Natural killer cell (primary cell): ENCODE measurements at regions of chr1 and their contacts with region 1.

Region 1: DNA sequence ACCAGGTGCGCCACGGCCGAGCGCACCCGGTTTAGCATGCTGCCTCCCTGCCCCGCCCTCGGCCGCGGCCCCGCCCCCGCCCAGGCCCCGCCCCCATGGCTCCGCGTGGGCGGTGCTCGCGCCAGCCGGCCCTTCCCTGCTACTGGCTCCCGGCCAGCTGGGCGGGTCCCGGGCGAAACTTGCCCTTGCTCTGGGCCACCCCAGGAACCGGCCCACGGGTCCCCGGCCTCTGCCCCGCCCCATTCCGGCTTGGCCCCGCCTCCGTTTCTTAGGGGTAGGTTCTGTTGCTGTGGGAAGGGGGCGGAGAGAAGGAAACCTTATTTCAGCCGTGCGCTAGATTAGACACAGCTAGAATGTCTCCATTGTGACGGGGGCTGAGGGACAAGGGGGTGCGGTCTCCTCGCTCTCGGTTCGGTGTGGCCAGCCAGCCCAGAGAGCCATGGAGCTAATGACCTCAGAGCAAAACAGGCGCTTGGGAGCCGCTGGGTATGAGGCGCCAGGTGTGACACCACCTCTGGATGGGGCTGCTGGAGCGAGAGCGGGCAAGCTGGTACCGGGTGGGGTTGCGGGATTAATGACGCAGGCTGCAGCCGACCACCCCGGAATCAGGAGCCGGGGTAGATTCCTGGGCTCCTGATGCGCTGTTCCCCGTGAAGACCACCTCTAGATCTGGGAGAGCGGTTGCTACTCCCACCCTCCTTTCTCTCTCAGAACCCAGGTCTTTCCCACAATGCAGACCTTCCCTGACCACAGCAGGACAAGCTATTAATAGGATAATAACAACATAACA is at the start of gene PPM1J:
- DNase-seq: peak; percentile 92 to 94
- ATAC-seq: peak; percentile 82 to 92 (median 86)
- H3K4me3 ChIP-seq: peak within 1 kb of the TSS; percentile 46
- H3K4me3 Mint-ChIP-seq: peak within 1 kb of the TSS; percentile 93
- H3K27ac ChIP-seq: no peak within 1 kb of the TSS
- H3K27ac Mint-ChIP-seq: peak within 1 kb of the TSS; percentile 67 to 87
- H3K4me1 ChIP-seq: peaks cover 37% of the 10 kb centered on the region
- H3K4me1 Mint-ChIP-seq: peaks cover 14 to 29% of the 10 kb centered on the region in 2 donors
- H3K27me3 ChIP-seq: peaks cover 18% of the 10 kb centered on the region
- H3K27me3 Mint-ChIP-seq: peaks cover 0 to 8% of the 10 kb centered on the region in 2 donors
- CTCF ChIP-seq: no peak
- total RNA-seq, gene PPM1J: 0.26 TPM in 1 of 3 donors, not detected in the others

Region 2: DNA sequence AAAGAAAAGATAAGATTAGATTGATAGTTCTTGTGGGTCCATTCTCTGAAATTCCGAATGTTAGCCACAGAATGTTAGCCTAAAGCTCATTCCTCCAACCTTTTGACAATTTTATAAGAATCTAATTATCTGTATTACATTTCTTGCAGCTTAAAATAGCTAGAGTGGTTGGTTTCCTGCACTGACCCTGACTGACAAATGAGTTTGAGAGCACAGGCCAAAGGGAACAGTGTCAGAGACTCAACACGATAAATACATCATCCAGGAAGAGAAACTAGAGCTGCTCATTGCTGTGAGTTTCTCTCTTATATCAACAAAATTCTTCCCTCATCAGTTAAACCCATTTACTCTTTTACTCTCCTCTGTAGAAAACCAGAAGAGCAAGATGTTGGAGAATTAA is 81.8 kb after region 1 on chr1:
- intact Hi-C with region 1: loop called (anchors 2 kb)
- DNase-seq: no peak
- ATAC-seq: no peak
- H3K4me3 ChIP-seq: no peak overlapping the region
- H3K4me3 Mint-ChIP-seq: no peak overlapping the region
- H3K27ac ChIP-seq: no peak overlapping the region
- H3K27ac Mint-ChIP-seq: no peak overlapping the region
- H3K4me1 ChIP-seq: peaks cover 4% of the 10 kb centered on the region
- H3K4me1 Mint-ChIP-seq: peaks cover 30 to 35% of the 10 kb centered on the region in 2 donors
- H3K27me3 ChIP-seq: no peaks in the 10 kb centered on the region
- H3K27me3 Mint-ChIP-seq: no peaks in the 10 kb centered on the region
- CTCF ChIP-seq: no peak

Region 3: GRCh38 chr1:112955781-112956543 is 240.5 kb after region 1 on chr1 and contains the start of gene SLC16A1:
- intact Hi-C with region 1: loop called (anchors 10 kb)
- DNase-seq: peak; percentile 75 to 92
- ATAC-seq: peak; percentile 81 to 92 (median 85)
- H3K4me3 ChIP-seq: peak within 1 kb of the TSS; percentile 97
- H3K4me3 Mint-ChIP-seq: peak within 1 kb of the TSS; percentile 97
- H3K27ac ChIP-seq: peak within 1 kb of the TSS; percentile 87
- H3K27ac Mint-ChIP-seq: peak within 1 kb of the TSS; percentile 3 to 97
- H3K4me1 ChIP-seq: peaks cover 25% of the 10 kb centered on the region
- H3K4me1 Mint-ChIP-seq: peaks cover 31 to 38% of the 10 kb centered on the region in 2 donors
- H3K27me3 ChIP-seq: no peaks in the 10 kb centered on the region
- H3K27me3 Mint-ChIP-seq: peaks cover 4 to 6% of the 10 kb centered on the region in 2 donors
- CTCF ChIP-seq: no peak
- total RNA-seq, gene SLC16A1: 8.7 to 18.5 (median 14.0) TPM

Region 4: DNA sequence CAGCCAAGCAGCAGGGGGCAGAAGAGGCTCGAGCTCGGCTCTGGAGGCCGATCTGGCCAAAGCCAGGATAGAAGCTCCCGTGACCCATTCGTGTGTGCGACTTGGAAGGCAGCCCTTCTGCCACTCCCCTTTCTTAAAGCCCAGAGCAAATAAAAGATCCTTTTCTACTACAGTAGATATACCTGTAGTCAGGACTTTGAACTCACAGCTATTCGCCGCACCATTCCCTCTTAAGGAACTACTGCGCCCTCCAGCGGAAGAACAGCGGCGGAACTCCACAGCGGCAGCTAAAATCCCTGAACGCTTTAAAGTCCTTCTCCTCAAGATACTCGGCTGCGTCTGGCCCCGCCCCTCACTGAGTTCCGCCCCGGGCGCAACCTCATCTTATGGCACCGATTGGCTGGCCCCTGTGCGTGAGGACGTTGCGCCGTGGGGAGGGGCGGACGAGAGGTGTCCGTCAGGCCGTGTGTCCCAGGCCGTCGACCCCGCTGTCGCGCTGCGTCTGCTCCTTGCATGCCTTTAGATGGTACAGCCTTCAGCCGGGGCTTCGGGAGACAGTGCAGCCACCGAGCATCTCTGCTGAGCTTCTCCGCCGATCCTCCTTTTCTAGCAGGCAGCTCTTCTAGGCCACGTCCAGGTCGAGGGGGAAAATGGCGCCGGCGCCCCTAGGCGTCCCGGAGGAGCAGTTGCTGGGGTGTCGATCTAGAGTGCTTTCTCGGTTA is 357.5 kb after region 1 on chr1 and contains the start of gene LRIG2:
- intact Hi-C with region 1: loop called (anchors 2 kb)
- DNase-seq: peak; percentile 95 to 98
- ATAC-seq: peak; percentile 95 to 99 (median 95)
- H3K4me3 ChIP-seq: peak within 1 kb of the TSS; percentile 72
- H3K4me3 Mint-ChIP-seq: peak within 1 kb of the TSS; percentile 97
- H3K27ac ChIP-seq: peak within 1 kb of the TSS; percentile 58
- H3K27ac Mint-ChIP-seq: peak within 1 kb of the TSS; percentile 95 to 99
- H3K4me1 ChIP-seq: peaks cover 10% of the 10 kb centered on the region
- H3K4me1 Mint-ChIP-seq: peaks cover 19 to 36% of the 10 kb centered on the region in 2 donors
- H3K27me3 ChIP-seq: no peaks in the 10 kb centered on the region
- H3K27me3 Mint-ChIP-seq: no peaks in the 10 kb centered on the region
- CTCF ChIP-seq: peak; percentile 88
- total RNA-seq, gene LRIG2: 20.2 to 28.5 (median 23.7) TPM